B cell (primary cell): ENCODE measurements at regions of chr6 and their contacts with region 1.

Region 1: DNA sequence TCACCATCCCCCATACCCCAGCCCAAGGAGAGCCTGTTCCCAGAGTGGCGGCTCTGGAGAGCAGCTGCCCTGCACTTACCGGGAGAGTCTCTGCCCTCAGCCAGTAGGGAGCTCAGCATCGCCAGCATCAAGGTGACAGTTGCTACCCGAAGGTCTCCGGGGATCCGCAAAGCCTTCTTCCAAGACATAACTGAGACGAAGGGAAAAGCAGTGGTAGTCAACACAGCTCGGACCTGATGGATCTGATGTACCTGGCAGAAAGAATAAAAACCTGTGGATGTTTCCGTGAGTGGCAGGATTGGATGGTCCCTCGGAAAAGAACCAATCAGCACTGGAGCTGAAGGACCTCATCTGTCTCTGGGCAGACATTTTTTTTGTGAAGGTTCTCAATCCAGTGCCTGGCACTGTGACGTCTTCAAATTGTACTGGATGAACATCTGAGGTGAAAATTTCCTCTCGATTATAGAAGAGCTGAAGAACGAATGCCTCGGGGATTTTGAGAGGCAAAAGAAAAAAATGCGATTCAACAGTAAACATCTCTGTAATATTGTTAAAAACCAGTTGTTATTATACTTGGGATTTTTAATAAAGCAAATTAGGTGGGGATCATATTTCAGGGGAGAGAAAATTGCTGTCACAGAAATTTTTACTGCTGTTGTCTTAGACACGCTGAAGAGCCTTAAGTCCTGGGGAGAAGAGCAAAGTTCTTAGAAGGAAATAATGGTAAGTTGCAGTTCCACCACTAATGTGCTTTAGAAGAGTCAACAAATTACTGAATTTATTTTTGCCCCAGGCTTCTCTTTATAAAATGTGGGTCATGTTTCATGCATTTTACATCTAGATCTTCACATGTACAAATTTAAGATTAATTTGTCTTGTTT is at the start of gene HLA-DQB1:
- DNase-seq: peak; percentile 85
- ATAC-seq: peak; percentile 61
- H3K4me3 ChIP-seq: peak within 1 kb of the TSS; percentile 57 to 98 (median 69)
- H3K4me3 Mint-ChIP-seq: peak within 1 kb of the TSS; percentile 96
- H3K27ac ChIP-seq: peak within 1 kb of the TSS; percentile 96 to 99
- H3K27ac Mint-ChIP-seq: peak within 1 kb of the TSS; percentile 97
- H3K4me1 ChIP-seq: peaks cover 23 to 34% of the 10 kb centered on the region in 2 donors
- H3K4me1 Mint-ChIP-seq: peaks cover 62% of the 10 kb centered on the region
- H3K27me3 ChIP-seq: no peaks in the 10 kb centered on the region
- H3K27me3 Mint-ChIP-seq: no peaks in the 10 kb centered on the region
- CTCF ChIP-seq: no peak
- total RNA-seq, gene HLA-DQB1: 267 and 287 TPM in 2 replicates

Region 2: GRCh38 chr6:32445321-32445854 is 221.3 kb before region 1 on chr6:
- CTCF ChIA-PET with region 1: no interaction called
- POLR2A ChIA-PET with region 1: interaction called, 13 read pairs
- intact Hi-C with region 1: no loop called
- DNase-seq: peak; percentile 36
- ATAC-seq: no peak
- H3K4me3 ChIP-seq: no peak overlapping the region
- H3K4me3 Mint-ChIP-seq: peak overlapping the region; percentile 38
- H3K27ac ChIP-seq: peak overlapping the region in 1 of 2 donors; percentile 51
- H3K27ac Mint-ChIP-seq: peak overlapping the region; percentile 54
- H3K4me1 ChIP-seq: peaks cover 36 to 38% of the 10 kb centered on the region in 2 donors
- H3K4me1 Mint-ChIP-seq: peaks cover 59% of the 10 kb centered on the region
- H3K27me3 ChIP-seq: no peaks in the 10 kb centered on the region
- H3K27me3 Mint-ChIP-seq: no peaks in the 10 kb centered on the region
- CTCF ChIP-seq: no peak

Region 3: GRCh38 chr6:32551410-32551809 is 115.2 kb before region 1 on chr6:
- CTCF ChIA-PET with region 1: no interaction called
- POLR2A ChIA-PET with region 1: no interaction called
- intact Hi-C with region 1: no loop called
- DNase-seq: no peak
- ATAC-seq: no peak
- H3K4me3 ChIP-seq: no peak overlapping the region
- H3K4me3 Mint-ChIP-seq: no peak overlapping the region
- H3K27ac ChIP-seq: no peak overlapping the region
- H3K27ac Mint-ChIP-seq: no peak overlapping the region
- H3K4me1 ChIP-seq: peaks cover 0 to 5% of the 10 kb centered on the region in 2 donors
- H3K4me1 Mint-ChIP-seq: peaks cover 12% of the 10 kb centered on the region
- H3K27me3 ChIP-seq: no peaks in the 10 kb centered on the region
- H3K27me3 Mint-ChIP-seq: no peaks in the 10 kb centered on the region
- CTCF ChIP-seq: no peak

Region 4: GRCh38 chr6:32622545-32623401 is 43.9 kb before region 1 on chr6:
- CTCF ChIA-PET with region 1: interaction called, 4 read pairs
- POLR2A ChIA-PET with region 1: interaction called, 8 read pairs
- intact Hi-C with region 1: loop called (anchors 1 kb)
- DNase-seq: peak; percentile 94
- ATAC-seq: peak; percentile 66
- H3K4me3 ChIP-seq: peak overlapping the region in 4 of 5 experiments; percentile 18 to 41 (median 34)
- H3K4me3 Mint-ChIP-seq: peak overlapping the region; percentile 82
- H3K27ac ChIP-seq: peak overlapping the region; percentile 97 to 99
- H3K27ac Mint-ChIP-seq: peak overlapping the region; percentile 98
- H3K4me1 ChIP-seq: peaks cover 58 to 62% of the 10 kb centered on the region in 2 donors
- H3K4me1 Mint-ChIP-seq: peaks cover 65% of the 10 kb centered on the region
- H3K27me3 ChIP-seq: no peaks in the 10 kb centered on the region
- H3K27me3 Mint-ChIP-seq: no peaks in the 10 kb centered on the region
- CTCF ChIP-seq: peak; percentile 72

Region 5: GRCh38 chr6:32685603-32686002 is 18.9 kb after region 1 on chr6:
- CTCF ChIA-PET with region 1: interaction called, 43 read pairs
- POLR2A ChIA-PET with region 1: interaction called, 123 read pairs
- intact Hi-C with region 1: loop called (anchors 1 kb)
- DNase-seq: peak; percentile 90
- ATAC-seq: peak; percentile 80
- H3K4me3 ChIP-seq: peak overlapping the region in 1 of 5 experiments; percentile 48
- H3K4me3 Mint-ChIP-seq: peak overlapping the region; percentile 60
- H3K27ac ChIP-seq: peak overlapping the region; percentile 89 to 99
- H3K27ac Mint-ChIP-seq: peak overlapping the region; percentile 92
- H3K4me1 ChIP-seq: peaks cover 43 to 54% of the 10 kb centered on the region in 2 donors
- H3K4me1 Mint-ChIP-seq: peaks cover 73% of the 10 kb centered on the region
- H3K27me3 ChIP-seq: no peaks in the 10 kb centered on the region
- H3K27me3 Mint-ChIP-seq: no peaks in the 10 kb centered on the region
- CTCF ChIP-seq: no peak

Region 6: DNA sequence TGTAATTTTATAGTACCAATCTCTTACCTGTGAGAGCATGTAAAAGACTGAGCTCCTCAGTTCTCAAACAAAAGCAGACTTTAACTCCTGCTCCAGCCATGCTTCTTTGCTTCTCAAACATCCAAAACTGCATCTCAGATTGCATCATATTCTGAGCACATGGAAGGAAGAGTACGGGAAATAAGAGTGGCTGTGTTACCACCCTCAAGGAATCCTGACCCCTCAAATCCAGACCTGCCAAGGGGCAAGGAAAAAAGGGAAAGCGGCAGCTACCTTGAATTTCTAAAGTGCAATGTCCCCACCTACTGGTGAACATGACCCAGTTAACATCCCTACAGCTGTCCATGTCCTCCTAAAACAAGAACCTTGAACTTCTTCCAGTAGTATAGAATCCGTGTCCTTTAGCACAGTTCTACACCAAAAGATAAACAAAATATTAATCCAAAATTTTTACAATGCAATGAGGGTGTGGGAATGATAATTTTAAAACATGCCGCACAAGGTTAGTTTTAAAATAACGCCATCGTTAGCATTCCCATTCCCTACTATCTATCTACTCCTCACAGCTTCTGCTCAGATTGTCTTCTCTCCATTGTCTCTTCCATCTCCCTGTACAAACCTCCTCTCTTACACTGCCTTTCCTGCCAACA is 33.9 kb after region 1 on chr6:
- CTCF ChIA-PET with region 1: interaction called, 23 read pairs
- POLR2A ChIA-PET with region 1: interaction called, 4 read pairs
- intact Hi-C with region 1: loop called (anchors 1 kb)
- DNase-seq: peak; percentile 79
- ATAC-seq: peak; percentile 71
- H3K4me3 ChIP-seq: peak overlapping the region in 3 of 5 experiments; percentile 13 to 38 (median 27)
- H3K4me3 Mint-ChIP-seq: peak overlapping the region; percentile 84
- H3K27ac ChIP-seq: no peak overlapping the region
- H3K27ac Mint-ChIP-seq: peak overlapping the region; percentile 85
- H3K4me1 ChIP-seq: peaks cover 0 to 4% of the 10 kb centered on the region in 2 donors
- H3K4me1 Mint-ChIP-seq: peaks cover 18% of the 10 kb centered on the region
- H3K27me3 ChIP-seq: peaks cover 0 to 6% (median 4%) of the 10 kb centered on the region in 4 experiments
- H3K27me3 Mint-ChIP-seq: peaks cover 3% of the 10 kb centered on the region
- CTCF ChIP-seq: peak; percentile 64

Region 7: DNA sequence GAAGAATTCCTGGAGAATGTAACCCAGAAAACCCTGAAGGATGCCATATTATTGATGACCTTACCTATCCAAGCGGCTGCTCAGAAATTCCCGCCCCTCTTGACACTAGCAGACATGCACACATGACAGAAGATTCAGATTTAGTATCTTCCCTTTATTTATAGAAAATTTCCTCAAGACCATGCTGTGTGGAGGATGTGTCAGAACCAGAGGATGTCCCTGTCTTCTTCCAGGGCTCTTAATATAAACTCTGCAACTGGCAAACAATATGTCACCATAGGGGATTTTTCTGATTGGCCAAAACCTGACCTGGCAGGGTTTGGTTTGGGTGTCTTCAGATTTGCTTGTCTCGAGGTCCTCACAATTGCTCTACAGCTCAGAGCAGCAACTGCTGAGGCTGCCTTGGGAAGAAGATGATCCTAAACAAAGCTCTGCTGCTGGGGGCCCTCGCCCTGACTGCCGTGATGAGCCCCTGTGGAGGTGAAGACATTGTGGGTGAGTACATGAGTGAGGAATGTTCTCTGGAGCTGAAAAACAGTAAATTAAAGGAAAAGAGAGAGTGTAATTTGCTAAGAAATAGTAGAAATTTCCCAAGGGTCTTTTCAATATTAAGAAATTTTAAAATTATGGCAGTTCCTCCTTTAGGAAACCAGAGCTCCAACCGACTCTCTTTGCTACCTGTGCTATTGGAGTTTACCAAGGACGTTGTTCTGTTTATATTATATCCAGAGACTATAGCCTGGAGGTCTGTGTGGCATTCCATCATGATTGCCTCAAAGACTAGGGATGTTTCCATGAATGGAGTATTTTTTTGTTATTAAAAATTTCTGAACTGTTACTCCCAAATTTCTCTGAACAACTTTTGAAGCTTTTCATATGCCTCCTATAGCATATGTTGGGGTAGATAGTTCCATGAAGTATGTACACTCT is 74.6 kb after region 1 on chr6 and contains the start of gene HLA-DQA2:
- CTCF ChIA-PET with region 1: no interaction called
- POLR2A ChIA-PET with region 1: no interaction called
- intact Hi-C with region 1: no loop called
- DNase-seq: peak; percentile 70
- ATAC-seq: peak; percentile 99
- H3K4me3 ChIP-seq: peak within 1 kb of the TSS in 1 of 5 experiments; percentile 34
- H3K4me3 Mint-ChIP-seq: peak within 1 kb of the TSS; percentile 86
- H3K27ac ChIP-seq: peak within 1 kb of the TSS in 1 of 2 donors; percentile 68
- H3K27ac Mint-ChIP-seq: peak within 1 kb of the TSS; percentile 89
- H3K4me1 ChIP-seq: peaks cover 0 to 2% of the 10 kb centered on the region in 2 donors
- H3K4me1 Mint-ChIP-seq: peaks cover 7% of the 10 kb centered on the region
- H3K27me3 ChIP-seq: peaks cover 0 to 7% (median 3%) of the 10 kb centered on the region in 4 experiments
- H3K27me3 Mint-ChIP-seq: peaks cover 30% of the 10 kb centered on the region
- CTCF ChIP-seq: no peak
- total RNA-seq, gene HLA-DQA2: 171 and 173 TPM in 2 replicates

Region 8: DNA sequence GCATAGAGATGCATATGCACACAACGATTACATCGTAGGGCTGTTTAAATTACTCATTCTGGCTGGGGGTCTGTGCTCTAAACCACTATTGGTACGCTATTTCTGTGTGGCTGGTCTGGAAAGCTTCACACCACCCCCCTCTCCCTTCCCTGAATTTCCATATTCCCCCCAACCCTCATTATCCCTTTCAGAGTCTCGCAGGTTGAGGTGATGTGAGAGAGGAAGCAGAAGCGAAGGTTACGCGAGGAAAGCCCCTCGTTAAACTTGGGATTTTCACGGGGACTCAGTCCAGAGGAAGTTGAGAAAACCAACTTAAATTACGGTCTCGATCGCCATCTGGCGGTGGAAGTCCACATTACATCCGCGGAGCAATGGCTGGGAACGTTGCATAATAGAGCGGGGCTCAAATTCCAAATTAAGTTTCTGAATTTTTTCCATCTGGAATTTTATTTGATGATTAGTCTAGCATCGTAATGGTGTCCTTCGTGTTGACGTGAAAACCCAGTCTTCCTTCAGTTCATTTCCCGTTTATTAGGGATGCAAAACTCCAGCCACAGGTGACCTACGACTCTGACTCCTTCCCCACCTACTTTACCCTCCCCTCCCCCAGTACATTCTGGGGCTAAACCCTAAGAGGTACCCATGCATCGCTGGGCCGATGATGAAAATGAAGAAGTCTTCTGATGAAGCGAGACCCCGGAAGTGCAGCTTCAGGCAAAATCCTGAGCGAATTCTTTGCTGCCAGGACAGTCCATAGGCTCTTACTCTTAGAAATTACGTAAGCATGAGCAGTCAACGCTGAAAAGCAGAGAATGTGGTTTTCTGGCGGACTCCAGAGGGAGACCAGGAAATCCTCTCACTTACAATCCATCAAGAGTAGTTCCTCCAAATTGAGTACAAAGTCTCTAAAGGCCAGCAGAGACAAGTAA is 130.5 kb after region 1 on chr6:
- CTCF ChIA-PET with region 1: interaction called, 3 read pairs
- POLR2A ChIA-PET with region 1: interaction called, 5 read pairs
- intact Hi-C with region 1: loop called (anchors 1 kb)
- DNase-seq: peak; percentile 92
- ATAC-seq: peak; percentile 83
- H3K4me3 ChIP-seq: peak overlapping the region in 4 of 5 experiments; percentile 26 to 53 (median 42)
- H3K4me3 Mint-ChIP-seq: peak overlapping the region; percentile 90
- H3K27ac ChIP-seq: peak overlapping the region; percentile 60 to 64
- H3K27ac Mint-ChIP-seq: peak overlapping the region; percentile 93
- H3K4me1 ChIP-seq: peaks cover 26 to 32% of the 10 kb centered on the region in 2 donors
- H3K4me1 Mint-ChIP-seq: peaks cover 40% of the 10 kb centered on the region
- H3K27me3 ChIP-seq: no peaks in the 10 kb centered on the region
- H3K27me3 Mint-ChIP-seq: no peaks in the 10 kb centered on the region
- CTCF ChIP-seq: peak; percentile 91